PC-9 (cell line): ENCODE measurements at regions of chr16 and their contacts with region 1.

Region 1: DNA sequence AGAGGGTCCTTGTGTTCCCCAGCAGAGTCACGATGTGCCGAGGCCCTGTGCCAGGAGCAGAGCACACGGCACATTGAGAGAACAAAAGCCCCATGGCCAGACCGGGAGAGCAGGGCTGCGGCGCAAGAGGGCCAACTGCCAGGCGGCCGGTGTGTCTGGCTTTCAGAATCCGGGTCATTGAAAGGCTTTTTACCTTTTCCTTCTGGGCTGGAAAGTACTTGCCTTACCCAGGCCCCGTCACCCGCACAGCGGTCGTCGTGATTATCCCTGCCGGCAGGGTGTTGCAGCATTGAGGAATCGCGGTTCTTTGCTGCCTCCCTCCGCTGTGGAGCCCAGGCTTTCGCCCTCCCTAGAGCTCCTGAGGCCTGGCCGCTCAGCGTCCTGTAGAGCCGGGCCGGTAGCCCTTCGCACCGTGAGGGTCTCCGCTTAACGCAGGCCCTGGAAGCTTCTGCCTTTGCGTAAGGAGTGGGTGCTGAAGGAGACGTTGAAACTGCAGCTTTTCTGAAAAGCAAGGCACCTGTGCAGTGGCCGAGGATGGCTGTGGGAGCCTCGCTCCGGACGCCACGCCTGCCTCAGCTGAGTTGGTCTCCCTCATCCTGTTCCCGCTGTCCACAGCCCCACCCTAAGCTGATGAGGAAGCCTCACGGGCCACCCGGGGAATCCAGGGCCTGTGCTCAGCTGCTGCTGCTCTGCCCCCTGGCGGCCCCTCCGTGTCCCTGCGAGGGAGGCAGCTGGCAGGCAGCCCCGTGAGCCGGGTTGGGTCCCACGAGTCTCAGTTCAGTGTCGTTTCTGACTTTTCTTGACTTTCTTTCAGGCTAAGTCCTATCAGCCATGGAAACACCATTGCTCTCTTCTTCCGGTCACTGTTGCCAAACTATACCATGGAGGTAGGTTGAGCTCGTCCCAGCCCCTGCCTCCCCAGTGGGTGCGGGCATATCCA is 8.6 kb upstream of the MC1R start:
- DNase-seq: peak in 1 of 2 experiments; percentile 76
- H3K4me3 ChIP-seq: no peak overlapping the region
- H3K27ac ChIP-seq: no peak overlapping the region
- H3K4me1 ChIP-seq: no peaks in the 10 kb centered on the region
- H3K27me3 ChIP-seq: no peaks in the 10 kb centered on the region
- CTCF ChIP-seq: peak; percentile 83

Region 2: GRCh38 chr16:89256651-89257254 is 653.3 kb before region 1 on chr16:
- CTCF ChIA-PET with region 1: no interaction called
- POLR2A ChIA-PET with region 1: interaction called, 15 read pairs
- intact Hi-C with region 1: no loop called
- DNase-seq: peak in 1 of 2 experiments; percentile 67
- H3K4me3 ChIP-seq: peak overlapping the region; percentile 33; the same call in 1 of the 2 replicates
- H3K27ac ChIP-seq: no peak overlapping the region
- H3K4me1 ChIP-seq: no peaks in the 10 kb centered on the region
- H3K27me3 ChIP-seq: no peaks in the 10 kb centered on the region
- CTCF ChIP-seq: no peak

Region 3: GRCh38 chr16:89657442-89658220 is 252.4 kb before region 1 on chr16 and contains the starts of genes CHMP1A and SPATA33:
- CTCF ChIA-PET with region 1: interaction called, 16 read pairs
- POLR2A ChIA-PET with region 1: no interaction called
- intact Hi-C with region 1: no loop called
- DNase-seq: peak; percentile 66 to 95
- H3K4me3 ChIP-seq: peak within 1 kb of the TSS; percentile 93
- H3K27ac ChIP-seq: no peak within 1 kb of the TSS
- H3K4me1 ChIP-seq: peaks cover 18% of the 10 kb centered on the region
- H3K27me3 ChIP-seq: no peaks in the 10 kb centered on the region
- CTCF ChIP-seq: no peak
- total RNA-seq, gene CHMP1A: 151 and 237 TPM in 2 replicates
- total RNA-seq, gene SPATA33: 21.0 and 25.6 TPM in 2 replicates

Region 4: GRCh38 chr16:89711601-89712273 is 198.3 kb before region 1 on chr16:
- CTCF ChIA-PET with region 1: no interaction called
- POLR2A ChIA-PET with region 1: interaction called, 14 read pairs
- intact Hi-C with region 1: no loop called
- DNase-seq: peak; percentile 44 to 72
- H3K4me3 ChIP-seq: peak overlapping the region; percentile 98
- H3K27ac ChIP-seq: no peak overlapping the region
- H3K4me1 ChIP-seq: peaks cover 4% of the 10 kb centered on the region; the same call in 1 of the 2 replicates
- H3K27me3 ChIP-seq: no peaks in the 10 kb centered on the region
- CTCF ChIP-seq: no peak

Region 5: DNA sequence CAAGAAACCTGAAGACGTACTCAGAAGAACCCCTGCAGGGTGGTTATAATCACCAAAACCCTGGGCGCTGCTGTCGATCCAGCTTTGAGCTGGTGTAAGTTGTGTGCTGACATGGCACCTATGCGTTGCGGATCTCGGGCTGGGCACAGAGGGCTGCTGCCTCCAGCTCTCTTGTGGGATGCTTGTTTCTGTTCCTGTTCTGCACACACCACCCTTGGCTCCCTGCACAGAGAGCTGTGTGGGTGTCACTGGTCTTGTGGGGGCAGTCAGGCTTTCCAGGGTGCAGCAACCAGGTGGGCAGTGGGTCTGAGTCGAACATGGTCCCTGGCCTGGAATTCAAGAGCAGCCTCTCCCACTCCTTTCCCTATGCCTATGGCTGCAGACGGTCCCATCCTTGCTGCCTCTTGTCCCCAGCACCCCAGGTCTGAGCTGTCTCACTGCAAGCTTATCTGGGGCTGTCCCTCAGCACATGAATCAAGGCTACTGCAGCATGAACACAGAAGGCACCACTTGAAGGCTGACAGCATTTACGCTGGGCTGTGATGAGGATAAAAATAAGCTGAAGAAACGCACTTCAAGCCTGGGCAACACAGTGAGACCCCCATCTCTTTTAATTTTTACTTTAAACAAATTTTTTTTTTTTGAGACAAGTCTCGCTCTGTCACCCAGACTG is 168.6 kb before region 1 on chr16:
- CTCF ChIA-PET with region 1: no interaction called
- POLR2A ChIA-PET with region 1: interaction called, 11 read pairs
- intact Hi-C with region 1: no loop called
- DNase-seq: no peak
- H3K4me3 ChIP-seq: no peak overlapping the region
- H3K27ac ChIP-seq: no peak overlapping the region
- H3K4me1 ChIP-seq: no peaks in the 10 kb centered on the region
- H3K27me3 ChIP-seq: no peaks in the 10 kb centered on the region
- CTCF ChIP-seq: no peak

Region 6: DNA sequence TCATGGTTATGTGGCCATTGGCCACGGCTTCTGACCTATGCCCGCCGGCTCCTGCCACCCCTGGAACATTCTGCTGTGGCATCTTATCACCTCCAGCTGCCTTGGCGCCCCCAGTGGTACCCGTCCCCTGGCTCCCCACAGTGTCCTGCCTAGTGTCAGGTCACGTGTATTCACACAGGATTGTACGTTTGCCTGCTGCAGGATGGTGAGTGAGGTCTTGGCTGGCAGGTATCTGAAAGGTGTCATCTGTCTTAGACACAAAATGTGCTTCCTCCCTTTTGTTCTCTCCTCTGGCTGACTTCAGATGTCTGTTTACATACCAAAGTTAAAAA is 84.3 kb after region 1 on chr16:
- CTCF ChIA-PET with region 1: interaction called, 33 read pairs
- POLR2A ChIA-PET with region 1: no interaction called
- intact Hi-C with region 1: no loop called
- DNase-seq: no peak
- H3K4me3 ChIP-seq: no peak overlapping the region
- H3K27ac ChIP-seq: peak overlapping the region; percentile 100
- H3K4me1 ChIP-seq: no peaks in the 10 kb centered on the region
- H3K27me3 ChIP-seq: no peaks in the 10 kb centered on the region
- CTCF ChIP-seq: no peak